ENCODE measurements at regions of chr16 and their contacts with region 1.

Region 1: GRCh38 chr16:58487566-58488351 is 12.2 kb upstream of the NDRG4 start:
- DNase-seq: peak; percentile 93 to 96
- H3K4me3 ChIP-seq: peak overlapping the region in 2 of 4 experiments; percentile 7 to 23; a peak in 2 of 8 replicates
- H3K27ac ChIP-seq: no peak overlapping the region
- H3K4me1 ChIP-seq: peaks cover 0 to 4% (median under 1%) of the 10 kb centered on the region in 4 experiments; a peak in 2 of 7 replicates
- H3K27me3 ChIP-seq: no peaks in the 10 kb centered on the region; a peak in 2 of 7 replicates
- CTCF ChIP-seq: peak; percentile 97 to 99 (median 98)
- EP300 ChIP-seq: no peak
- POLR2A ChIP-seq: no peak
- RAD21 ChIP-seq: peak; percentile 97 to 98

Region 2: GRCh38 chr16:58047557-58048348 is 440.0 kb before region 1 on chr16:
- CTCF ChIA-PET with region 1: no interaction called
- POLR2A ChIA-PET with region 1: no interaction called
- DNase-seq: no peak
- H3K4me3 ChIP-seq: no peak overlapping the region
- H3K27ac ChIP-seq: no peak overlapping the region
- H3K4me1 ChIP-seq: peaks cover 0 to 15% (median 8%) of the 10 kb centered on the region in 4 experiments; a peak in 4 of 7 replicates
- H3K27me3 ChIP-seq: no peaks in the 10 kb centered on the region
- CTCF ChIP-seq: peak in 2 of 3 experiments; percentile 10 to 15; a peak in 1 of 4 replicates
- EP300 ChIP-seq: no peak
- POLR2A ChIP-seq: no peak
- RAD21 ChIP-seq: peak; percentile 50 to 51

Region 3: GRCh38 chr16:58329147-58329546 is 158.6 kb before region 1 on chr16:
- CTCF ChIA-PET with region 1: interaction called, 67 read pairs
- POLR2A ChIA-PET with region 1: no interaction called
- DNase-seq: no peak
- H3K4me3 ChIP-seq: no peak overlapping the region
- H3K27ac ChIP-seq: no peak overlapping the region
- H3K4me1 ChIP-seq: peaks cover 2 to 10% (median 4%) of the 10 kb centered on the region in 4 experiments; a peak in 5 of 7 replicates
- H3K27me3 ChIP-seq: no peaks in the 10 kb centered on the region
- CTCF ChIP-seq: no peak
- EP300 ChIP-seq: no peak
- POLR2A ChIP-seq: no peak
- RAD21 ChIP-seq: no peak

Region 4: DNA sequence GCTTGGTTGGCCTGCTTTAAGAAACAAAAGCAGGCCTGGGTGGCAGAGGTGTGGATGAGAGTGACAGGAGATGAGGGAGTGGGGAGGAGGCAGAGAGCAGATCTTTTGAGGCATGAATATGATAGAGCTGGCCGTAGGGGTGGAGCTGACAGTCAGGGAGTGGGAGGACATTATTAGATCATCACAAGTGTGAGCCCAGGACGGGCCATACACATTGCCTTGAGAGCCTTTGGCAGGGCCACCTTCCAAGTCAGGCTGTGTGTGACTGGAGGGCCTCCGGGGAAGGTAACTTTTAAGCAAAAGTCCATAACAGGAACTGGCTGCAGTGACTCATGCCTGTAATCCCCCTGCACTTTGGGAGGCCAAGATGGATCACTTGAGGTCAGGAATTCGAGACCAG is 69.2 kb before region 1 on chr16:
- CTCF ChIA-PET with region 1: no interaction called
- POLR2A ChIA-PET with region 1: no interaction called
- DNase-seq: no peak
- H3K4me3 ChIP-seq: no peak overlapping the region
- H3K27ac ChIP-seq: no peak overlapping the region
- H3K4me1 ChIP-seq: peaks cover 3 to 11% (median 5%) of the 10 kb centered on the region in 4 experiments
- H3K27me3 ChIP-seq: no peaks in the 10 kb centered on the region
- CTCF ChIP-seq: no peak
- EP300 ChIP-seq: no peak
- POLR2A ChIP-seq: no peak
- RAD21 ChIP-seq: no peak

Region 5: GRCh38 chr16:58462997-58463941 is 24.5 kb before region 1 on chr16:
- CTCF ChIA-PET with region 1: interaction called, 15 read pairs
- POLR2A ChIA-PET with region 1: interaction called, 6 read pairs
- DNase-seq: peak in 1 of 2 experiments; percentile 70
- H3K4me3 ChIP-seq: peak overlapping the region; percentile 54 to 79 (median 60)
- H3K27ac ChIP-seq: no peak overlapping the region
- H3K4me1 ChIP-seq: peaks cover 0 to 19% (median 7%) of the 10 kb centered on the region in 4 experiments; a peak in 6 of 7 replicates
- H3K27me3 ChIP-seq: peaks cover 27 to 54% (median 48%) of the 10 kb centered on the region in 4 experiments
- CTCF ChIP-seq: no peak
- EP300 ChIP-seq: no peak
- POLR2A ChIP-seq: no peak
- RAD21 ChIP-seq: no peak

Measured in H1 (cell line).